ENCODE measurements at regions of chr6 and their contacts with region 1.

Region 1: GRCh38 chr6:14711056-14711703 is 534.7 kb upstream of the JARID2 start:
- DNase-seq: no peak
- ATAC-seq: peak; percentile 37 to 42

Region 2: GRCh38 chr6:14799928-14800327 is 88.7 kb after region 1 on chr6:
- intact Hi-C with region 1: loop called in 1 of 2 experiments (anchors 5 kb)
- DNase-seq: peak; percentile 54
- ATAC-seq: peak; percentile 86 to 90

Measured in left cardiac atrium (tissue), 4 donors.